ENCODE measurements at regions of chr4 and their contacts with region 1.

Region 1: GRCh38 chr4:75673027-75673958 is at the start of gene G3BP2:
- H3K4me3 Mint-ChIP-seq: peak within 1 kb of the TSS; percentile 97
- H3K27ac Mint-ChIP-seq: peak within 1 kb of the TSS; percentile 100
- H3K4me1 Mint-ChIP-seq: peaks cover 39% of the 10 kb centered on the region
- H3K27me3 Mint-ChIP-seq: no peaks in the 10 kb centered on the region

Region 2: GRCh38 chr4:75514131-75514948 is 159.0 kb before region 1 on chr4 and contains the starts of genes RCHY1 and THAP6:
- intact Hi-C with region 1: loop called (anchors 5 kb)
- H3K4me3 Mint-ChIP-seq: no peak within 1 kb of the TSS
- H3K27ac Mint-ChIP-seq: no peak within 1 kb of the TSS
- H3K4me1 Mint-ChIP-seq: peaks cover 26% of the 10 kb centered on the region
- H3K27me3 Mint-ChIP-seq: no peaks in the 10 kb centered on the region

Region 3: GRCh38 chr4:75698162-75698962 is 25.1 kb after region 1 on chr4:
- intact Hi-C with region 1: loop called (anchors 1 kb)
- H3K4me3 Mint-ChIP-seq: peak overlapping the region; percentile 54
- H3K27ac Mint-ChIP-seq: peak overlapping the region; percentile 86
- H3K4me1 Mint-ChIP-seq: peaks cover 32% of the 10 kb centered on the region
- H3K27me3 Mint-ChIP-seq: no peaks in the 10 kb centered on the region

Region 4: DNA sequence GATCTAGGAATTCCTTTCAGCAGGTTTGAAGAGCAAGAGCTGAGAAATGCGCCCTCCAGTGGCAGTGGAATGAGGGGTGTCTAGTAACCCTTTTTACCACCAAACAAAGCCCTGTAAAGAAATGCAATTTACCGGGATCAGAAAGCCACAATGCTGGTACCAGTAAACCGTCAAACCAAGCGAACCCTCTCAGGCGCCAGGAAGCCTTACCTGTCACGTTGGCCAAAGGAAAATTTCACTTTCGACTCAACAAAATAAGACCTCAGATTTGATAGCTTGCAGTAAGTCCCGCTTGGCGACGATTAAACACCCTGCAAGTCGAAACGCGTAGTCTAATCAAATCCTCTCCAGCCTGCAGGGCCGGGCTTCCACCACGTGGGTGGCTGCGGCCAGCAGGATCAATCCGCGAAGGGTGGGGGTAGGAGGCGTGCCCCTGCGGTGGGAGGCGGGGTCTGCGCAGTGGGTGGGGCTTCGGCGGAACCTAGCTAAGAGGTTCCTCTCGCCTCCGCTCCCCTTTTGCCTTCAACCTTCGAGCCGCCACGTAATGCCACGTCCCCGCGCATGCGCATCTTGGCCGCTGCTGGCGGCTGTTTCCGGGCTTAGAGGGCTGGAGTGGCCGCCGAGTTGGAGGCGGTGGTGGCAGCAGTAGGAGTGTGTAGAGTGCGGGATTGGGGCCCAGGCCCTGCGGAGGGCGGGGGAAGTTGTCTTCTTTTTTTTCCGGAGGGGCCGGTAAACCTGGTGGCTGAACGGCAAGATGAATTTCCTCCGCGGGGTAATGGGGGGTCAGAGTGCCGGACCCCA is 51.0 kb after region 1 on chr4 and contains the start of gene USO1:
- intact Hi-C with region 1: loop called (anchors 1 kb)
- H3K4me3 Mint-ChIP-seq: peak within 1 kb of the TSS; percentile 100
- H3K27ac Mint-ChIP-seq: peak within 1 kb of the TSS; percentile 100
- H3K4me1 Mint-ChIP-seq: peaks cover 48% of the 10 kb centered on the region
- H3K27me3 Mint-ChIP-seq: no peaks in the 10 kb centered on the region

Region 5: DNA sequence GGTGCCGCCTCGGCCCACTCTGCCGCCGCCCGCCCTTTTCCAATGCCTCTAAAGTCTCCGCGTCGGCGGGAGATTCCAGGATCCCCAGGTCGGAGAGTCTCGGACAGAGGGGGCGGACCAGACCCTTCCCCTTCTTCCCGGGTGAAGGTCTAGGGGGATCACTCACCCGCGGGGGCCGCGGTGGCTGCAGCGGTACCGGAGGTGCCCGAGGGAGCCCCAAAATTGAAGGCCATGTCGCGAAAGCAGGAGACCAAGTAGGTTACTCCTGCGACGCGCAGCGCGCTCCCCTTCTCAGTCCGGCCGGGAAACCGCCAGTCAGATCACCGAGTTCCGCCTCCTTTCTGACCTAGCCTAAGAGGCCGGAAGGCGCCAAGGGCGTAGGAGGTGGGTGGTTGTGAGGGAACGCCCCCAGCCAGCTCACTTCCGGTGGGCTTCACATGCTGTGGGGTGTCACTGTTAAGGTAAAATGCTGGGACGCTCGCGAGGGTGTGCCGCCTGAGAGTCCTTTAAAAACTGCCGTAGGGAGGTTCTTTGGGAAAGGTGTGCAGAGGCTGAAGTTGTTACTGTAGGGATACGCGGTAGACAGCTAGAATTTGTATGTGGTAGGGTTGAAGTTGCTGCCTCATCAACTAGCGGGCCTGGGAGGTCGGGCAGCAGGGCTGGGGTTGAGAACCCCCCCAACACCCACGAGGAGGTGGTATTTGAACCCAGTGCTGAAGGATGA is 475.0 kb after region 1 on chr4 and contains the start of gene NUP54:
- intact Hi-C with region 1: loop called (anchors 2 kb)
- H3K4me3 Mint-ChIP-seq: peak within 1 kb of the TSS; percentile 97
- H3K27ac Mint-ChIP-seq: peak within 1 kb of the TSS; percentile 91
- H3K4me1 Mint-ChIP-seq: peaks cover 6% of the 10 kb centered on the region
- H3K27me3 Mint-ChIP-seq: no peaks in the 10 kb centered on the region

Measured in dendritic cell treated with granulocyte-macrophage colony-stimulating factor and Interleukin-4, amounts not matched to agents 40 ng/mL and 50 ng/mL, for 4 days (primary cell).